ENCODE measurements at regions of chr3 and their contacts with region 1.

Region 1: GRCh38 chr3:119194237-119195150 is 21.1 kb downstream of the UPK1B start:
- DNase-seq: peak; percentile 67
- ATAC-seq: peak; percentile 86
- H3K4me3 ChIP-seq: no peak overlapping the region
- H3K27ac ChIP-seq: peak overlapping the region; percentile 97
- H3K4me1 ChIP-seq: peaks cover 12% of the 10 kb centered on the region
- H3K27me3 ChIP-seq: no peaks in the 10 kb centered on the region
- CTCF ChIP-seq: no peak
- POLR2A ChIP-seq: no peak
- RAD21 ChIP-seq: no peak

Region 2: DNA sequence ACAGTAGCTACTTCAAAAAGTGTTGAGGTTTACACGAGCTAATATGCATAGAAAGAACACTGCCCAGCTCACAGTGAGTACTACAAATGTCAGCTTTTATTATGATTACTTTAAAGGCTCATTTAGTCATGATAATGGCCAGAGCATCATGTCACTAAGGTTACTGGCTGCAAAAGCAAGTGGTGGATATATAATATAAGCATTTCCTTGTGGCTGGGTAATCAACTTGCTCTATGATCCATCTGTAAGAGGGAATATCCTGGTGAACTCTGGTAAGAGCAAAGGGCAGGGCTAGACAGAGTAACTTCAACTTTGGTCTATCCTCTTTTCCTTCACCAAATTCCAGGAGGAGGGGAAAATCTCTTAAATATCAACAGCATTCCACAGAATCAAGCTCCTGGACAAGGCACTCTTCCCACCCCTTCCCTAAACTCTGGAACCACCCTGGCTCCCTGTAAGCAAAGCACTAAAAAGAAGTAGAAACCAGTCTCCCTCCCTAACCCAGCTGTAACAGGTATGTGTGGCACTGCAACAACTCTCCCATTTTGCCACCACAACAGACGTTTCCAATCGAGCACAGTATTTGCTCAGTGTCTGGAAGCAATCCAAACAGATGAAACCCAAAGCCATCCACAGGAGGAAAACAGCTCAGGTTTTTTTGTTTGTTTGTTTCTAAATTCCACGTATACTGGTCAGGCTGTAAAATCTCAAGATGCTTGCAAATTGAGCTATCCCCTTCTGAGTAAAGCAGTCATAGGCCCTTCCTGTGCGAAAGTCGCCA is 32.8 kb after region 1 on chr3:
- CTCF ChIA-PET with region 1: no interaction called
- POLR2A ChIA-PET with region 1: no interaction called
- dilution Hi-C with region 1: no loop called
- in situ Hi-C with region 1: no loop called
- intact Hi-C with region 1: loop called (anchors 5 kb)
- DNase-seq: no peak
- ATAC-seq: peak; percentile 45
- H3K4me3 ChIP-seq: no peak overlapping the region
- H3K27ac ChIP-seq: no peak overlapping the region
- H3K4me1 ChIP-seq: peaks cover 13% of the 10 kb centered on the region
- H3K27me3 ChIP-seq: no peaks in the 10 kb centered on the region
- CTCF ChIP-seq: no peak
- POLR2A ChIP-seq: no peak
- RAD21 ChIP-seq: no peak

Region 3: GRCh38 chr3:119395923-119396358 is 201.4 kb after region 1 on chr3:
- CTCF ChIA-PET with region 1: no interaction called
- POLR2A ChIA-PET with region 1: no interaction called
- dilution Hi-C with region 1: no loop called
- in situ Hi-C with region 1: no loop called
- intact Hi-C with region 1: no loop called
- DNase-seq: no peak
- ATAC-seq: no peak
- H3K4me3 ChIP-seq: no peak overlapping the region
- H3K27ac ChIP-seq: no peak overlapping the region
- H3K4me1 ChIP-seq: no peaks in the 10 kb centered on the region
- H3K27me3 ChIP-seq: no peaks in the 10 kb centered on the region
- CTCF ChIP-seq: no peak
- POLR2A ChIP-seq: no peak
- RAD21 ChIP-seq: no peak

Region 4: GRCh38 chr3:120263792-120264191 is 1069.3 kb after region 1 on chr3:
- CTCF ChIA-PET with region 1: no interaction called
- POLR2A ChIA-PET with region 1: no interaction called
- dilution Hi-C with region 1: no loop called
- in situ Hi-C with region 1: no loop called
- intact Hi-C with region 1: no loop called
- DNase-seq: no peak
- ATAC-seq: no peak
- H3K4me3 ChIP-seq: no peak overlapping the region
- H3K27ac ChIP-seq: no peak overlapping the region
- H3K4me1 ChIP-seq: no peaks in the 10 kb centered on the region
- H3K27me3 ChIP-seq: peaks cover 10% of the 10 kb centered on the region
- CTCF ChIP-seq: no peak
- POLR2A ChIP-seq: no peak
- RAD21 ChIP-seq: no peak